ENCODE measurements at regions of chr15 and their contacts with region 1.

Region 1: DNA sequence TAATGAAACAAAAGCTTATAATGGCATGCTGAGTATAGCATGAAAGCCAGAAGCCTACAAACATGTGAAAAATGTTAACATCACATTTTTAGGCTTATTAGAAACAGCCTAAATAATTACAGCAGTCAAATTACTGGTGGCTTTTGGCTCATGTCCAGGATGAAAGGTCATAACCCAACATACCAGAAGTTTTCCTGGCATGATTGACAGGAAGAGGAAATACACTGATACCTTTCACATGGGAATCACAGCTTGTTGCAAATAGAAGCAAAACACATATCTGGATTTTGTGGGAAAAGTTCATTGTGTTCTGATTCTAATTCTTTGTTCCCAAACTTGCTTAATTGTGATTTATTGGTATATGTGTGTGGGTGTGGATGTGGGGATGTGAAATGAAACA is 393.5 kb upstream of the ARRDC4 start:
- DNase-seq: no peak
- H3K4me3 ChIP-seq: no peak overlapping the region
- H3K27ac ChIP-seq: no peak overlapping the region
- H3K4me1 ChIP-seq: no peaks in the 10 kb centered on the region
- H3K27me3 ChIP-seq: no peaks in the 10 kb centered on the region
- CTCF ChIP-seq: no peak
- EP300 ChIP-seq: no peak
- POLR2A ChIP-seq: no peak

Region 2: DNA sequence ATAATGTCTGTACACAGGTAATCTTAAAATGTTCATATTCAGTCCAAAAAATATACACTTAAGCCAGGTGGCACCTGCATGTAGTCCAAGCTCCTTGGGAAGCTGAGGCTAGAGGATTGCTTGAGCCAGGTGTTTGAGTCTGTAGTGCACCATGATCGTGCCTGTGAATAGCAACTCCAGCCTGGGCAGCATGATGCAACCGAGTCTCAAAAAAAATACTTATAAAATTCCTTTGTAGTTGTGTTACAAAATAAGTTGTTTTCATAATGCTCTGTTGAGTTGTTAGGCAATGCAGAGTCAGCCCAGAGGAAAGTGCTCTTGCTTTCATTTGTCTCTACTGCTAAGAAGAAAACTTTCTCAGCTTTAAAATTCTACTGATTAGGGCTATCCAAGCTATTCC is 49.2 kb before region 1 on chr15:
- in situ Hi-C with region 1: no loop called
- intact Hi-C with region 1: loop called (anchors 2 kb)
- DNase-seq: no peak
- H3K4me3 ChIP-seq: no peak overlapping the region
- H3K27ac ChIP-seq: no peak overlapping the region
- H3K4me1 ChIP-seq: no peaks in the 10 kb centered on the region
- H3K27me3 ChIP-seq: no peaks in the 10 kb centered on the region
- CTCF ChIP-seq: no peak
- EP300 ChIP-seq: no peak
- POLR2A ChIP-seq: no peak

Region 3: DNA sequence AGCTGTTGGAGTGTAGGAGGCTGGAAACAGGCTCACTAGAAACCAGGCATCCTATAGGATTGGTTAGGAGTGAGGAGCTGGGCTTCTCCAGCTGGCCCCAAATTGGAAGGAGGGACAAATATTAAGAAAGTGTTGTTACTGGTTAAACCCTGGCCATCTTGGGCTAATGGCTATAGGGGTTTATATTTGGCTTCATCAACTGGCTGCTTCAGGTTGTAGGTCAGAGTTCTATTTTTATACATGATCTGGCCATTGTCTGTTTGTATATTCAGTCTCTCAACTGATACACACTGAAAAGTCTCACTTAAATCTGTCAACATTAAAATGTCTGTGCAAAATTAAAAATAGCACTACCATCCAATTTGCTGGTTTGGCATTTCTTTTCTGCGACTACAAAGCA is 323.3 kb after region 1 on chr15:
- in situ Hi-C with region 1: no loop called
- intact Hi-C with region 1: no loop called
- DNase-seq: no peak
- H3K4me3 ChIP-seq: no peak overlapping the region
- H3K27ac ChIP-seq: no peak overlapping the region
- H3K4me1 ChIP-seq: no peaks in the 10 kb centered on the region
- H3K27me3 ChIP-seq: no peaks in the 10 kb centered on the region
- CTCF ChIP-seq: no peak
- EP300 ChIP-seq: no peak
- POLR2A ChIP-seq: no peak

Measured in transverse colon (tissue), 4 donors.